Tibial artery (tissue), 4 donors: ENCODE measurements at regions of chr9 and their contacts with region 1.

Region 1: DNA sequence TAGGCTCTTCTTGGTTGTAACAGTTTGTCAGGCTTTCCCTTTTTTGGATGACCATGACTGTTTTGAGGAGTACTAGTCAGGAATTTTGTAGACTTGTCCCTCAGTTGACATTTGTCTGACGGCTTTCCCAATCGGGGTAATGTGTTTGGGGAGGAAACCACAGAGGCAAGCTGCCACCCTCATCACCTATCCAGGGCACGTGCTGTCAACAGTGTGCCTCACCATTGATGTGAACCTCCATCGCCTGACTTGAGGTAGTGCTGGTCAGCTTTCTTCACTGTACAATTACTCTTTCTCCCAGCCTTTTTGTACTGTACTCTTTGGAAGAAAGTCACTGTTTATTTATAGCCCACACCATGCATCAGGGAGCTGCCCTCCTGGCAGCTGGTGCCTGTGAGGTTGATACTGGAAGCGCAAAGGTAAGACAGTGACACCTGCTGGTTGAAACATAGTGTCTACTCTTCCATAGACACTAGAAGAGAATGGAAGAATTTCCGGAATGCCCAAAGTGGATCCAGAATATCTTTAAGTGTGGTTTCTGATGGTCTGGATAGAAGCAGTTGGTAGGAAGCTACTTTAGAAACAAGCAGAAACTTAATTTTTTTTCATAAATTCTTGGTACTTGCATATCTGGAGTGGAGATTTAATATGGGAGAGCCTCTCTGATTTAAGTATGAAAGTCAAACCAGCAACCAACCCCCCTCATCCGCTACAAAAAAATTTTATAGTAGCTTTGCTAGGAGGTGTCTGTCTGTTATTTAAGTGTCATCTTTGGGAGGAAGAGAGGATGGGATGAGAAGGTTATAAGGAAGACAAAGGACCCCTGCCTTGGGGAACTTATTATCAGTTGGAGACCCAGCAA is 69.3 kb downstream of the SNX30 start:
- DNase-seq: peak; percentile 49 to 76
- H3K4me3 ChIP-seq: no peak overlapping the region
- H3K27ac ChIP-seq: peak overlapping the region in 1 of 2 donors; percentile 7
- H3K4me1 ChIP-seq: peaks cover 0 to 30% (median 5%) of the 10 kb centered on the region in 4 donors
- H3K27me3 ChIP-seq: no peaks in the 10 kb centered on the region
- CTCF ChIP-seq: peak; percentile 66 to 70

Region 2: GRCh38 chr9:112717661-112718341 is 102.1 kb before region 1 on chr9 and contains the start of gene INIP:
- intact Hi-C with region 1: loop called (anchors 10 kb)
- DNase-seq: peak; percentile 93 to 97
- H3K4me3 ChIP-seq: peak within 1 kb of the TSS; percentile 78 to 95
- H3K27ac ChIP-seq: peak within 1 kb of the TSS; percentile 86 to 92
- H3K4me1 ChIP-seq: peaks cover 0 to 20% (median 9%) of the 10 kb centered on the region in 4 donors
- H3K27me3 ChIP-seq: no peaks in the 10 kb centered on the region
- CTCF ChIP-seq: peak in 1 of 2 experiments; percentile 24

Region 3: GRCh38 chr9:112867416-112867991 is 47.6 kb after region 1 on chr9:
- intact Hi-C with region 1: no loop called
- DNase-seq: peak in 1 of 2 donors; percentile 59
- H3K4me3 ChIP-seq: no peak overlapping the region
- H3K27ac ChIP-seq: no peak overlapping the region
- H3K4me1 ChIP-seq: peaks cover 0 to 6% (median 0%) of the 10 kb centered on the region in 4 donors
- H3K27me3 ChIP-seq: no peaks in the 10 kb centered on the region
- CTCF ChIP-seq: no peak

Region 4: GRCh38 chr9:113275157-113276131 is 455.6 kb after region 1 on chr9 and contains the starts of genes CDC26 and PRPF4:
- intact Hi-C with region 1: no loop called
- DNase-seq: peak; percentile 97 to 98
- H3K4me3 ChIP-seq: peak within 1 kb of the TSS; percentile 87 to 93
- H3K27ac ChIP-seq: peak within 1 kb of the TSS; percentile 87 to 93
- H3K4me1 ChIP-seq: peaks cover 0 to 28% (median 18%) of the 10 kb centered on the region in 4 donors
- H3K27me3 ChIP-seq: no peaks in the 10 kb centered on the region
- CTCF ChIP-seq: peak in 1 of 2 experiments; percentile 23